Naive thymus-derived CD4-positive, alpha-beta T cell (primary cell): ENCODE measurements at regions of chr2 and their contacts with region 1.

Region 1: GRCh38 chr2:172564376-172564775 is 8.5 kb downstream of the PDK1 start:
- DNase-seq: no peak
- ATAC-seq: no peak
- H3K4me3 ChIP-seq: no peak overlapping the region
- H3K4me3 Mint-ChIP-seq: no peak overlapping the region
- H3K27ac ChIP-seq: no peak overlapping the region
- H3K27ac Mint-ChIP-seq: peak overlapping the region in 1 of 9 donors; percentile 62
- H3K4me1 ChIP-seq: peaks cover 0 to 18% of the 10 kb centered on the region in 2 donors
- H3K4me1 Mint-ChIP-seq: peaks cover 1 to 80% (median 66%) of the 10 kb centered on the region in 7 donors
- H3K27me3 ChIP-seq: no peaks in the 10 kb centered on the region
- H3K27me3 Mint-ChIP-seq: no peaks in the 10 kb centered on the region

Region 2: DNA sequence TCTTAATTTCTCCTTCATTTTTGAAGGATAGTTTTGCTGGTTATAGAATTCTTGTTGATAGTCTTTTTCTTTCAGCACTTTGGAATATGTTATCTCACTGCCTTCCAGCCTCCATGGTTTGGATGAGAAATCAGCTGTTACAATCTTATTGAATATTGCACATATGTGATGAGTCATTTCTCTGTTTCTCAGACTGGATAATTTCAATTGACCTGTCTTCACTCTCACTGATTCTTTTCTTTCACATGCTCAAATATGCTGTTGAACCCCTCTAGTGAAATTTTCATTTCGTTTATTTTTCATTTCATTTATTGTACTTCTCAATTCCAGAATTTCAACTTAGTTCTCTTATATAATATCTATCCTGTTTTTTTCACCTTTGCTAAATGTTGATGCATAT is 13.7 kb after region 1 on chr2:
- CTCF ChIA-PET with region 1: no interaction called
- POLR2A ChIA-PET with region 1: no interaction called
- intact Hi-C with region 1: loop called in 1 of 2 experiments (anchors 2 kb)
- DNase-seq: no peak
- ATAC-seq: no peak
- H3K4me3 ChIP-seq: no peak overlapping the region
- H3K4me3 Mint-ChIP-seq: peak overlapping the region in 2 of 10 donors; percentile 4 to 28
- H3K27ac ChIP-seq: no peak overlapping the region
- H3K27ac Mint-ChIP-seq: no peak overlapping the region
- H3K4me1 ChIP-seq: peaks cover 0 to 3% of the 10 kb centered on the region in 2 donors
- H3K4me1 Mint-ChIP-seq: peaks cover 14 to 53% (median 45%) of the 10 kb centered on the region in 7 donors
- H3K27me3 ChIP-seq: no peaks in the 10 kb centered on the region
- H3K27me3 Mint-ChIP-seq: no peaks in the 10 kb centered on the region